ENCODE measurements at regions of chr1 and their contacts with region 1.

Region 1: GRCh38 chr1:39691262-39692151 is at the start of gene HPCAL4:
- DNase-seq: peak; percentile 80 to 91 (median 90)
- H3K4me3 ChIP-seq: peak within 1 kb of the TSS in 5 of 7 experiments; percentile 10 to 67 (median 50)
- H3K27ac ChIP-seq: no peak within 1 kb of the TSS
- H3K4me1 ChIP-seq: peaks cover 0 to 21% (median 13%) of the 10 kb centered on the region in 4 experiments
- H3K27me3 ChIP-seq: peaks cover 8 to 98% (median 43%) of the 10 kb centered on the region in 5 experiments

Region 2: DNA sequence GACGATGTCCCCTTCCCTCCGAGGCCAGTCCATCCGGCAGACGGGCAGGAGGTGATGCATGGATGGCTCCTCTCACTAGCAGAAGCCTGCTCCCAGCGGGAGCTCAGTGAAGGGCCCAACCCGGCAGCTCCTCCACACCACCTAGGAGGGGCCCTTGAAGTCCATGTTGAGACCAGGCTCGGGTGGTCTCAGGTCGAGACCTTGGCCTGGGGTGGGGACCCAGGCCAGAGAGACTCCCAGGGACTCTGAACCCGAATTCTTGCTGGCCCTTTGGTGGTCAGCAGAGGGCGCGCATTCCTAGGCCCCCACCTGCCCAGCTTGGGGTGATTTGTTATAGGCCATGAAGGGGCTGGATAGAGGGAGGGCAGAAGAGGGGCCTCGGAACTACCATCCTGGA is 19.0 kb before region 1 on chr1:
- CTCF ChIA-PET with region 1: interaction called, 16 read pairs
- POLR2A ChIA-PET with region 1: no interaction called
- DNase-seq: peak in 2 of 3 donors; percentile 13 to 26
- H3K4me3 ChIP-seq: peak overlapping the region in 3 of 7 experiments; percentile 58 to 70 (median 59)
- H3K27ac ChIP-seq: no peak overlapping the region
- H3K4me1 ChIP-seq: peaks cover 0 to 16% (median 12%) of the 10 kb centered on the region in 4 experiments
- H3K27me3 ChIP-seq: peaks cover 15 to 57% (median 44%) of the 10 kb centered on the region in 5 experiments

Measured in common myeloid progenitor, CD34-positive (primary cell).